ENCODE measurements at regions of chr16 and their contacts with region 1.

Region 1: GRCh38 chr16:28863929-28864793 is 518 bp downstream of the SH2B1 start:
- DNase-seq: peak; percentile 29
- H3K4me3 ChIP-seq: peak overlapping the region; percentile 70 to 99 (median 75)
- H3K27ac ChIP-seq: peak overlapping the region; percentile 76
- H3K4me1 ChIP-seq: peaks cover 9% of the 10 kb centered on the region
- H3K27me3 ChIP-seq: no peaks in the 10 kb centered on the region
- CTCF ChIP-seq: no peak

Region 2: DNA sequence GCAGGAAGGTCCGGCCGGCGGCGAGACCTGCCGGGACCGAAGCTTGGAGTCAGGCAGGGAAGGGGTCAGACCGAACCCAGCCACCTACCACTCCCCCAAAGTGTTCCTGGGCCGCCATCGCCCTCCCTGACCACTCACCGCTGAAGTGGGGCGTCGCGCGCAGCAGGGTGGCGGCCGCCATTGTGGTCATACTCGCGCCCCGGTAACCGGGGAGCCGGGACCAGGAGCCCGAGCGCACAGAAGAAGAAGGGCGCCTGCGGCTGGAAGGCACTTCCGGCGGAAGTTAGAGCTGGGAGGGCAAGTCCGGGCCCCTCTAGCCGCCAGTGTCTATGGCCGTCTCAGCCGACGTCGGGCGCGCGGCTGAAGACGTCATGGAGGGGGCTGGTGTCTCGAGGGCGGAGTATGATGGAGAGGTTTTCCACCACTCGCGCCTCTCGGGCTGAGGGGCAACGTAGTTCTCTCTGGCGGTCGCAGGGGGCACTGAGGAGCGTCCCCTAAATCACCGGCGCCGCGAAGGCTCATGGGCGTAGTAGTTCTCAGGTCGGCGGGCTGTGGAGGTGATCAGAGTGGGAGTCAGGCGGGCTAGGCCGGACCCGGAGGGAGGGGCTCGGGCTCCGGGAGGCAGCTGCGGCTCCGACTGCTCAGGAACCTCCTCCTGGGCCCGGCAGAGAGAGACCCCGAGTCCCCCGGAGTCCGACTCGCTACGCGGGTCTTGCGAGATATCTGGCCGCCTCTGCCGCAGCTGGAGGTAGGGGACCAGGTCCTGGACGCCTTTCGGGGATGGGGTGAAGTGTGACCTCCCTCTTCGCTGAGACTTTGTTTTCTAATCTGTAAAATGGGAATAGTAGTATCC is 17.9 kb before region 1 on chr16 and contains the start of gene TUFM:
- CTCF ChIA-PET with region 1: no interaction called
- dilution Hi-C with region 1: no loop called
- in situ Hi-C with region 1: no loop called
- intact Hi-C with region 1: loop called (anchors 1 kb)
- DNase-seq: peak; percentile 98
- H3K4me3 ChIP-seq: peak within 1 kb of the TSS; percentile 69 to 92 (median 89)
- H3K27ac ChIP-seq: peak within 1 kb of the TSS; percentile 59
- H3K4me1 ChIP-seq: peaks cover 9% of the 10 kb centered on the region
- H3K27me3 ChIP-seq: no peaks in the 10 kb centered on the region
- CTCF ChIP-seq: peak; percentile 50 to 59
- total RNA-seq, gene TUFM: 94.9 to 142 TPM

Measured in mammary epithelial cell (primary cell).